ENCODE measurements at regions of chr7 and their contacts with region 1.

Region 1: DNA sequence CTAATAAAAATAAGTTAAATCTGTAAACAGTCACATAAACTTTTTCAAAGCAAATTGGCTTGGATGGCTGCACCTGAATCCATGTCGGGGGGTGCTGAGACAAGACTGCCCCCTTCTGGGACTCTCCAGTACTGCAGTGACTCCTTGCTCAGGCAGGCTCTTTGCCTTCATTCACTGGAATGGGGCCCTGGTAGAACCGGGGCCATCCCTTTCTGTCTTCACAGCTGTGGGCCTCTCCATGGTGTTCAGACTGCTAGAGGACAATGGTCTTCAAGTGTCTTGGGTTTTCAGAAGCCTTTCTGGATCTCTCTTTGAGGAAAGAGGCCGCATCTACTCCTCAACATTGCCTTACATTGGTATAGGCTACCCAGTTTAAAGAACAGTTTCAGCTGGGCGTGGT is 16.1 kb upstream of the IMPDH1 start:
- DNase-seq: peak; percentile 67 to 80 (median 74)
- H3K4me3 ChIP-seq: no peak overlapping the region
- H3K4me3 Mint-ChIP-seq: no peak overlapping the region
- H3K27ac ChIP-seq: no peak overlapping the region
- H3K27ac Mint-ChIP-seq: no peak overlapping the region
- H3K4me1 ChIP-seq: no peaks in the 10 kb centered on the region
- H3K4me1 Mint-ChIP-seq: peaks cover 0 to 1% (median 0%) of the 10 kb centered on the region in 4 donors
- H3K27me3 ChIP-seq: no peaks in the 10 kb centered on the region
- H3K27me3 Mint-ChIP-seq: peaks cover 7 to 8% of the 10 kb centered on the region in 2 donors

Region 2: GRCh38 chr7:128343554-128344430 is 82.1 kb before region 1 on chr7 and contains the start of gene RBM28:
- CTCF ChIA-PET with region 1: interaction called, 76 read pairs
- POLR2A ChIA-PET with region 1: interaction called, 4 read pairs
- intact Hi-C with region 1: loop called (anchors 1 kb)
- DNase-seq: peak; percentile 88 to 93 (median 90)
- H3K4me3 ChIP-seq: peak within 1 kb of the TSS; percentile 82 to 83
- H3K4me3 Mint-ChIP-seq: peak within 1 kb of the TSS; percentile 95 to 98 (median 96)
- H3K27ac ChIP-seq: peak within 1 kb of the TSS; percentile 69
- H3K27ac Mint-ChIP-seq: peak within 1 kb of the TSS; percentile 92 to 97 (median 96)
- H3K4me1 ChIP-seq: peaks cover 27% of the 10 kb centered on the region
- H3K4me1 Mint-ChIP-seq: peaks cover 20 to 40% (median 29%) of the 10 kb centered on the region in 4 donors
- H3K27me3 ChIP-seq: no peaks in the 10 kb centered on the region
- H3K27me3 Mint-ChIP-seq: peaks cover 2 to 3% of the 10 kb centered on the region in 2 donors
- total RNA-seq, gene RBM28: 43.4 to 48.3 TPM

Region 3: DNA sequence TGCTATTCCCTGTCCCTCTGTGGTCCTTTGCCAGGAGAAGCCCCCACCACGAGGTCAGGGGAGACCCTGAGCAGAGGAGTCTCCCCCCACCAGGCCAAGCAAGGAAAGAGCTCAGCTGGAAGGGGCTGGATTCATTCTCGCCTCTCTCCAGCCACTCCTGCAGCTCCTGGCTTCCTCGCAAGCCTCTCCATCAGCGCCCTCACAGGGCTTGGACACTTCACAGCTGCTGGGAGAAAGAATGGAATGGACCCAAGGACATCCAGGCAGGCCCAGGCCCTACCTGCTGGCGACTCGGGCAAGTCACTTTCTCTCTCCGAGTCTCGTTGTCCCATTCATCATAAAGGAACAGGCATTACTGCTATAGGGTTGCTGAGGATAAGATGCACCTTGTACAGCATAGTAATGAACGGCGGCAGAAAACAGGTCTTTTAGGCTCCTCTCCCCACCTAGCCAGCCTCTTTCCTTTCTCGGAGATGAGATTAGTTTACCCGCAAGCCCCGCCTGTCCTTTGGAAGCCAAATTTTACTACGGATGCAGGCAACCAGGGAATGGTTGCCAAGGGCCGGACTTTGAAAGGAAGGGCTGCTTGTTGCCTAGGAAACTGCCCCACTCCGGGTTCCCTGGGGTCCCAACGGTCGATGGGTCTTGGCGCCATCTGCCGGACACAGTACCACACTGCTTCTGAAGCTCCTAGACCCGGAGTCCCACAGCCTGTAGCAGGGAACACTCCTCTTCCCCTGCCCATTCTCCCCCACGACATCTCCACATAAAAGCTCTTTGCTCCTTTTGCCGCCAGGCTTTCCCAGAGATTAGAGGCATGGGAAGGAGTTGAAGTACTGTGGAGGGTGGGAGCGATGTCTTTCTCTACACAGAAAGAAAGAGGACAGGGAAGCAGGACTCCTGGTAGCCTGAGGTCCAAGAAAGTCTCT is 38.4 kb before region 1 on chr7:
- CTCF ChIA-PET with region 1: interaction called, 76 read pairs
- POLR2A ChIA-PET with region 1: interaction called, 3 read pairs
- intact Hi-C with region 1: loop called (anchors 5 kb)
- DNase-seq: peak in 4 of 5 donors; percentile 48 to 56 (median 51)
- H3K4me3 ChIP-seq: no peak overlapping the region
- H3K4me3 Mint-ChIP-seq: no peak overlapping the region
- H3K27ac ChIP-seq: no peak overlapping the region
- H3K27ac Mint-ChIP-seq: no peak overlapping the region
- H3K4me1 ChIP-seq: no peaks in the 10 kb centered on the region
- H3K4me1 Mint-ChIP-seq: peaks cover 0 to 4% (median under 1%) of the 10 kb centered on the region in 4 donors
- H3K27me3 ChIP-seq: no peaks in the 10 kb centered on the region
- H3K27me3 Mint-ChIP-seq: no peaks in the 10 kb centered on the region

Region 4: GRCh38 chr7:128409596-128410160 is 16.2 kb before region 1 on chr7 and contains the start of gene IMPDH1:
- CTCF ChIA-PET with region 1: interaction called, 475 read pairs
- POLR2A ChIA-PET with region 1: interaction called, 8 read pairs
- intact Hi-C with region 1: loop called (anchors 1 kb)
- DNase-seq: peak; percentile 83 to 91 (median 85)
- H3K4me3 ChIP-seq: peak within 1 kb of the TSS; percentile 68 to 92
- H3K4me3 Mint-ChIP-seq: peak within 1 kb of the TSS; percentile 90 to 96 (median 92)
- H3K27ac ChIP-seq: peak within 1 kb of the TSS; percentile 85
- H3K27ac Mint-ChIP-seq: peak within 1 kb of the TSS; percentile 86 to 95 (median 94)
- H3K4me1 ChIP-seq: peaks cover 45% of the 10 kb centered on the region
- H3K4me1 Mint-ChIP-seq: peaks cover 22 to 43% (median 32%) of the 10 kb centered on the region in 4 donors
- H3K27me3 ChIP-seq: no peaks in the 10 kb centered on the region
- H3K27me3 Mint-ChIP-seq: no peaks in the 10 kb centered on the region
- total RNA-seq, gene IMPDH1: 48.0 to 49.4 TPM

Region 5: GRCh38 chr7:128437426-128438332 is 11.8 kb after region 1 on chr7:
- CTCF ChIA-PET with region 1: interaction called, 20 read pairs
- POLR2A ChIA-PET with region 1: no interaction called
- intact Hi-C with region 1: no loop called
- DNase-seq: no peak
- H3K4me3 ChIP-seq: no peak overlapping the region
- H3K4me3 Mint-ChIP-seq: peak overlapping the region in 1 of 8 donors; percentile 14
- H3K27ac ChIP-seq: no peak overlapping the region
- H3K27ac Mint-ChIP-seq: no peak overlapping the region
- H3K4me1 ChIP-seq: no peaks in the 10 kb centered on the region
- H3K4me1 Mint-ChIP-seq: no peaks in the 10 kb centered on the region
- H3K27me3 ChIP-seq: no peaks in the 10 kb centered on the region
- H3K27me3 Mint-ChIP-seq: peaks cover 3 to 4% of the 10 kb centered on the region in 2 donors

Region 6: DNA sequence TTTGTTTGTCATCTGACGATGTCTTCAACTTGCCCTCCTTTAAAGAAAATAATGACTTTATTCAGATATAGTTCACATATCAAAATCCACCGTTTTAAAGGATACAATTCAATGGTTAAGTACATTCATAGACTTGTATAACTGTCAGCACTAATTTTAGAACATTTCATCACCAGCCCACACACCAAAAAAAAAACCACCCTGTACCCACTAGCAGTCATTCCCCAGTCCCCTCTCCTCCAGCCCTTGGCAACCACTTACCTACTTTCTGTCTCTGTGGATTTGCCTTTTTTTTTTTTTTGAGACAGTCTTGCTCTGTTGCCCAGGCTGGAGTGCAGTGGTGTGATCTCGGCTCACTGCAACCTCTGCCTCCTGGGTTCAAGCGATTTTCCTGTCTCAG is 24.6 kb after region 1 on chr7:
- CTCF ChIA-PET with region 1: interaction called, 138 read pairs
- POLR2A ChIA-PET with region 1: interaction called, 7 read pairs
- intact Hi-C with region 1: no loop called
- DNase-seq: no peak
- H3K4me3 ChIP-seq: no peak overlapping the region
- H3K4me3 Mint-ChIP-seq: no peak overlapping the region
- H3K27ac ChIP-seq: no peak overlapping the region
- H3K27ac Mint-ChIP-seq: peak overlapping the region in 1 of 7 donors; percentile 2
- H3K4me1 ChIP-seq: peaks cover 7% of the 10 kb centered on the region
- H3K4me1 Mint-ChIP-seq: peaks cover 3 to 6% (median 5%) of the 10 kb centered on the region in 4 donors
- H3K27me3 ChIP-seq: no peaks in the 10 kb centered on the region
- H3K27me3 Mint-ChIP-seq: no peaks in the 10 kb centered on the region

Measured in CD4-positive, alpha-beta memory T cell (primary cell).